HCT116 (cell line): ENCODE measurements at regions of chr5 and their contacts with region 1.

Region 1: DNA sequence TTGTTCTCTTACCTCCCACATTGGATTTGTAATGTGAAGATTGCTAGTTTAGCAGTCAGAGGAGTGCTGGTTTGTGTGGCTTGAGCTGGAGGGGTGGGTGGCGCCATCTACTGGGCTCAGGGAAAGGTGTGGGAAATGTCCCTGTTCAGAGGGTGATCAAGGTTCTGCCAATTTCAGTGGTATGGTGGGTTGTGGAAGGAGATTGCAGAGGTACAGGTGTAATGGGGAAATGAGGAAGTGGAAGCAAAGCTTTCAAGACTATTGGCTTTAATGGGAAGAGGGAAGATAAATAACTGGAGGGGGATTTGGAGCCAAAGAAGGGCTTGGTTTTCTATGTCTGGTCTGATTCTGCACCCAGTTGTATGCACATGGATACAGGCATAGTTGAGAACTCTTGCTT is 76.4 kb downstream of the OSMR start:
- DNase-seq: peak; percentile 22
- ATAC-seq: peak; percentile 94
- H3K4me3 ChIP-seq: no peak overlapping the region
- H3K27ac ChIP-seq: no peak overlapping the region
- H3K4me1 ChIP-seq: no peaks in the 10 kb centered on the region
- H3K27me3 ChIP-seq: no peaks in the 10 kb centered on the region
- CTCF ChIP-seq: peak; percentile 63 to 97 (median 90); a peak in 5 of 6 replicates
- POLR2A ChIP-seq: no peak
- RAD21 ChIP-seq: peak; percentile 85

Region 2: DNA sequence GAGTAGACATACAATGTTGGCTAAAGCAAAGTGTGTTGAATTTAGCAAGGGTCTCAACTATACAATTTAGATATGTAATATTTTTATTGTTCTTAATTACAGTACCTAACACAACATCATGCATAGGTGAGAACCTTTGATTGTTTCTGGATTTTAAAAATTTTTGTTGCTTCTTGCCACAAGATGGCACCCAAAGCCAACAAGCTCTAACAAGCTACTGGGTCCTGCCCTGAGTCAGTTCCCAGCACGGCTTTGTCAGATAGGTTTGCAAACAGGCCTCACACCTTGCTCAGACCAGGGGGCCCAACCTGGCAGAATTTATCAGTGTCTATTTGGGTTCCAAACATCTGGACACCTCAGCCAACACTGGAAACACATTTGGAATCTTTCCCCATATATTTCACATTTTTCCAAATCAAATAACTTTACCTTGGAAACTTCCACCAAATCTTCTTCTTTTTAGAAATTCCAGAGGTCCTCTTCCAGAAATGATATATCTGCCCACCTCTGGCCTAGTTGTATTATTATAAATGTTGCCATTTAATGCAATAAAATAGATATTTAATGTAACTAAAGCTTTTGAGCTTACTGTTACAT is 713.3 kb before region 1 on chr5:
- CTCF ChIA-PET with region 1: no interaction called
- POLR2A ChIA-PET with region 1: no interaction called
- RAD21 ChIA-PET with region 1: no interaction called
- intact Hi-C with region 1: loop called (anchors 10 kb)
- DNase-seq: peak; percentile 47
- ATAC-seq: peak; percentile 78
- H3K4me3 ChIP-seq: no peak overlapping the region
- H3K27ac ChIP-seq: no peak overlapping the region
- H3K4me1 ChIP-seq: peaks cover 0 to 3% of the 10 kb centered on the region in 2 experiments; a peak in 1 of 4 replicates
- H3K27me3 ChIP-seq: no peaks in the 10 kb centered on the region
- CTCF ChIP-seq: peak; percentile 57 to 69 (median 59); a peak in 4 of 6 replicates
- POLR2A ChIP-seq: no peak
- RAD21 ChIP-seq: peak; percentile 87

Region 3: DNA sequence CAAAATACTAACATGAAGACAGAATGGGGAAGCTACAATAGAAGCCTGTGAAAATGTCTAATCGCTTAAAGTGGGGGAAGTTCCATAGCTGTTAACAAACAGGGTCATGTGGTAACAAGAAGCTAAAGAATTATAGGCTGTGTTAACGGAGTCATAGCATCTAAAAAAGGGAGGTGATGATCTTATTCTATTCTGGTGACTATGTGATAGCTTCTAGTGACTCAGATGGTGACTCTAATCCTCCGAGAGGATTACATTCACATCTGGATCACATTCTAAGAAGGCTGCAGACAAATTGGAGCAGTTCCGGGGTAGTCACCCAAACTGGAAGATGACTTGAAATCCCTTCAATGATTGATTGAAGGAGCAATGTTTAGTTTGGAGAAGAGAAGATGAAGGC is 507.9 kb before region 1 on chr5:
- CTCF ChIA-PET with region 1: no interaction called
- POLR2A ChIA-PET with region 1: no interaction called
- RAD21 ChIA-PET with region 1: no interaction called
- intact Hi-C with region 1: no loop called
- DNase-seq: no peak
- ATAC-seq: no peak
- H3K4me3 ChIP-seq: no peak overlapping the region
- H3K27ac ChIP-seq: no peak overlapping the region
- H3K4me1 ChIP-seq: no peaks in the 10 kb centered on the region
- H3K27me3 ChIP-seq: 0 out of 2 replicates have a peak, but pooled peaks cover 5% of the 10 kb centered on the region
- CTCF ChIP-seq: no peak
- POLR2A ChIP-seq: no peak
- RAD21 ChIP-seq: no peak

Region 4: GRCh38 chr5:38598994-38599611 is 323.1 kb before region 1 on chr5:
- CTCF ChIA-PET with region 1: no interaction called
- POLR2A ChIA-PET with region 1: no interaction called
- RAD21 ChIA-PET with region 1: no interaction called
- intact Hi-C with region 1: no loop called
- DNase-seq: peak; percentile 42
- ATAC-seq: peak; percentile 82
- H3K4me3 ChIP-seq: no peak overlapping the region
- H3K27ac ChIP-seq: no peak overlapping the region
- H3K4me1 ChIP-seq: peaks cover 24 to 69% of the 10 kb centered on the region in 2 experiments
- H3K27me3 ChIP-seq: no peaks in the 10 kb centered on the region
- CTCF ChIP-seq: no peak
- POLR2A ChIP-seq: no peak
- RAD21 ChIP-seq: no peak

Region 5: DNA sequence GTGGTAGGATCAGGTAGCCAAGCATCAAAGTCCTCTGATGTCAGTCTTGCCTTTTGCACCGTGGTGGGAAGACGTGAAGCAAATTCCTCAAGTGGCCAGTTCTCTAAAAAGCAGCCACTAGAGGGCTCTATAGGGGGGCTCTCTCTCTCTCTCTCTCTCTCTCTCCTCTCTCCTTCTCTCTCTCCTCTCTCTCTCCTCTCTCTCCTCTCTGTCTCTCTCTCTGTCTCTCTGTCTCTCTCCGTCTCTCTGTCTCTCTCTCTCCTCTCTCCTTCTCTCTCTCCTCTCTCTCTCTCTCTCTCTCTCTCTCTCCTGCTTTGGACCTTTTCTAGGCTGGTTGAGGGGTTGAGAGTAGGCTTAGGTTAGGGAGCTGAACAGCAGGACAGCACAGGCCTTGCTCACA is 90.3 kb before region 1 on chr5:
- CTCF ChIA-PET with region 1: interaction called, 3 read pairs
- POLR2A ChIA-PET with region 1: no interaction called
- RAD21 ChIA-PET with region 1: interaction called in 1 of 2 experiments, 5 read pairs
- intact Hi-C with region 1: loop called (anchors 1 kb)
- DNase-seq: no peak
- ATAC-seq: peak; percentile 80
- H3K4me3 ChIP-seq: no peak overlapping the region
- H3K27ac ChIP-seq: no peak overlapping the region
- H3K4me1 ChIP-seq: peaks cover 0 to 22% of the 10 kb centered on the region in 2 experiments; a peak in 2 of 4 replicates
- H3K27me3 ChIP-seq: no peaks in the 10 kb centered on the region
- CTCF ChIP-seq: peak; percentile 21 to 68 (median 64); a peak in 4 of 6 replicates
- POLR2A ChIP-seq: no peak
- RAD21 ChIP-seq: peak; percentile 37

Region 6: DNA sequence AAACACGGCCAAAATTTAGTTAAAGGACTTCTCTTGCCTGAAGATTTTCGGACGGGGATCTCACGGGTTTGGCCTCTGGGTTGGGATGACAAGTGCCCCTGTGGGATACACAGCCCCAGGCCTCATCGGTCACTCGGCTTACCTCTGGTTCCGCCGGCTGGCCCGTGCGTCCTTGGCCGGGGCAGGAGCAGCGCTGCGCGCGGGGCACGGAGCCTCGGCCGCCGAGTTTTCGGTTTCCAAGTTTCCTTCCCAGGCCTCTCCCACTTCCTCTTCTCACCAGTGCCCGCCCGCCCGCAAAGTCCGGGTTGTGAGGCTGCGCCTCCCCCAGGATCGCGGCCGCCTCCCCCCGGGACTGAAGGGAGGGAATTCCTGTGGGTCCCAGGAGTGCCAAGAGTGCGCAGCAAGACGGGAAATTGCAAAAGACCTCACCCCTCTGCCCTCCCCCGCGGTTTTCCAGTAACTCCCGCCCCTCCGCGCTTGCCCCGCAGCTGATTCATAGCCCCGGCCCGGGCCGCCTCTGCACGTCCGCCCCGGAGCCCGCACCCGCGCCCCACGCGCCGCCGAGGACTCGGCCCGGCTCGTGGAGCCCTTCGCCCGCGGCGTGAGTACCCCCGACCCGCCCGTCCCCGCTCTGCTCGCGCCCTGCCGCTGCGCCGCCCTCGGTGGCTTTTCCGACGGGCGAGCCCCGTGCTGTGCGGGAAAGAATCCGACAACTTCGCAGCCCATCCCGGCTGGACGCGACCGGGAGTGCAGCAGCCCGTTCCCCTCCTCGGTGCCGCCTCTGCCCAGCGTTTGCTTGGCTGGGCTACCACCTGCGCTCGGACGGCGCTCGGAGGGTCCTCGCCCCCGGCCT is 76.4 kb before region 1 on chr5 and contains the start of gene OSMR:
- CTCF ChIA-PET with region 1: no interaction called
- POLR2A ChIA-PET with region 1: no interaction called
- RAD21 ChIA-PET with region 1: no interaction called
- intact Hi-C with region 1: loop called (anchors 1 kb)
- DNase-seq: peak; percentile 78
- ATAC-seq: peak; percentile 90
- H3K4me3 ChIP-seq: peak within 1 kb of the TSS; percentile 61 to 90
- H3K27ac ChIP-seq: peak within 1 kb of the TSS; percentile 91
- H3K4me1 ChIP-seq: peaks cover 23 to 29% of the 10 kb centered on the region in 2 experiments
- H3K27me3 ChIP-seq: no peaks in the 10 kb centered on the region
- CTCF ChIP-seq: no peak
- POLR2A ChIP-seq: peak; percentile 16
- RAD21 ChIP-seq: no peak
- total RNA-seq, gene OSMR: 46.0 TPM

Region 7: GRCh38 chr5:39100851-39101396 is 178.7 kb after region 1 on chr5:
- CTCF ChIA-PET with region 1: no interaction called
- POLR2A ChIA-PET with region 1: no interaction called
- RAD21 ChIA-PET with region 1: no interaction called
- intact Hi-C with region 1: no loop called
- DNase-seq: no peak
- ATAC-seq: no peak
- H3K4me3 ChIP-seq: no peak overlapping the region
- H3K27ac ChIP-seq: no peak overlapping the region
- H3K4me1 ChIP-seq: peaks cover 0 to 26% of the 10 kb centered on the region in 2 experiments; a peak in 2 of 4 replicates
- H3K27me3 ChIP-seq: no peaks in the 10 kb centered on the region
- CTCF ChIP-seq: no peak
- POLR2A ChIP-seq: no peak
- RAD21 ChIP-seq: no peak